Gastrocnemius medialis (tissue), 4 donors: ENCODE measurements at regions of chr20 and their contacts with region 1.

Region 1: GRCh38 chr20:7392542-7393206 is 547.6 kb downstream of the HAO1 start:
- DNase-seq: no peak
- ATAC-seq: no peak
- H3K4me3 ChIP-seq: no peak overlapping the region
- H3K27ac ChIP-seq: no peak overlapping the region
- H3K4me1 ChIP-seq: no peaks in the 10 kb centered on the region
- H3K27me3 ChIP-seq: no peaks in the 10 kb centered on the region
- CTCF ChIP-seq: no peak
- POLR2A ChIP-seq: no peak

Region 2: GRCh38 chr20:7291946-7292345 is 100.7 kb before region 1 on chr20:
- in situ Hi-C with region 1: no loop called
- intact Hi-C with region 1: no loop called
- DNase-seq: no peak
- ATAC-seq: no peak
- H3K4me3 ChIP-seq: no peak overlapping the region
- H3K27ac ChIP-seq: no peak overlapping the region
- H3K4me1 ChIP-seq: peaks cover 0 to 4% of the 10 kb centered on the region in 2 donors
- H3K27me3 ChIP-seq: no peaks in the 10 kb centered on the region
- CTCF ChIP-seq: no peak
- POLR2A ChIP-seq: no peak

Region 3: GRCh38 chr20:7426890-7427496 is 34.3 kb after region 1 on chr20:
- in situ Hi-C with region 1: no loop called
- intact Hi-C with region 1: loop called (anchors 1 kb)
- DNase-seq: no peak
- ATAC-seq: no peak
- H3K4me3 ChIP-seq: no peak overlapping the region
- H3K27ac ChIP-seq: no peak overlapping the region
- H3K4me1 ChIP-seq: no peaks in the 10 kb centered on the region
- H3K27me3 ChIP-seq: no peaks in the 10 kb centered on the region
- CTCF ChIP-seq: no peak
- POLR2A ChIP-seq: no peak